ENCODE measurements at regions of chr1 and their contacts with region 1.

Region 1: DNA sequence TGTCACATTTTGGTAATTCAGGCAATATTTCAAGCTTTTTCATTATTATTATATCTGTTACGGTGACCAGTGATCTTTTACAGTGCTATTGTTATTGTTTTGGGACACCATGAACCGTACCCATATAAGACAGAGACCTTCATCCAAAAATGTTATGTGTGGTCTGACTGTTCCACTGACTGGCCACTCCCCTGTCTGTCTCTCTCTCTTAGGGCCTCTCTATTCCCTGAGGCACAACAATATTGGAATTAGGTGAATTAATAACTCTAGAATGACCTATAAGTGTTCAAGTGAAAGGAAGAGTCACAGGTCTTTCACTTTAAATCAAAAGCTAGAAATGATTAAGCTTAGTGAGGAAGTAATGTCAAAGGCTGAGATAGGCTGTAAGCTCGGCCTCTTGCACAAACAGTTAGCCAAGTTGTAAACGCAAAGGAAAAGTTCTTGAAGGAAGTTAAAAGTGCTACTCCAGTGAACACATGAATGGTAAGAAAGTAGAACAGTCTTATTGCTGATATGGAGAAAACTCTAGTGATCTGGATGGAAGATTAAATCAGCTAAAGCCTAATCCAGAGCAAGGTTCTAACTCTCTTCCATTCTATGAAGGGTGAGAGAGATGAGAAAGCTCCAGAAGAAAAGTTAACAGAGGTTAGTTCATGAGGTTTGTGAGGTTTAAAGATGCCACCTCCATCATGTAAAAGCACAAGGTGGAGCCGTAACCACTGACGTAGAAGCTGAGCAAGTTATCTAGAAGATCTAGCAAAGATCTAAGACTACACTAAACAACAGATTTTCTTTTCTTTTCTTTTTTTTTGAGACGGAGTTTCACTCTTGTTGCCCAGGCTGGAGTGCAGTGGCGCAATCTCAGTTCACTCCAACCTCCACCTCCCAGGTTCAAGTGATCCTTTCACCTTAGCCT is 19.7 kb upstream of the DIPK1A start:
- DNase-seq: peak; percentile 55
- H3K4me3 Mint-ChIP-seq: peak overlapping the region; percentile 70
- H3K27ac Mint-ChIP-seq: peak overlapping the region; percentile 98
- H3K4me1 Mint-ChIP-seq: peaks cover 60% of the 10 kb centered on the region
- H3K27me3 Mint-ChIP-seq: no peaks in the 10 kb centered on the region

Region 2: DNA sequence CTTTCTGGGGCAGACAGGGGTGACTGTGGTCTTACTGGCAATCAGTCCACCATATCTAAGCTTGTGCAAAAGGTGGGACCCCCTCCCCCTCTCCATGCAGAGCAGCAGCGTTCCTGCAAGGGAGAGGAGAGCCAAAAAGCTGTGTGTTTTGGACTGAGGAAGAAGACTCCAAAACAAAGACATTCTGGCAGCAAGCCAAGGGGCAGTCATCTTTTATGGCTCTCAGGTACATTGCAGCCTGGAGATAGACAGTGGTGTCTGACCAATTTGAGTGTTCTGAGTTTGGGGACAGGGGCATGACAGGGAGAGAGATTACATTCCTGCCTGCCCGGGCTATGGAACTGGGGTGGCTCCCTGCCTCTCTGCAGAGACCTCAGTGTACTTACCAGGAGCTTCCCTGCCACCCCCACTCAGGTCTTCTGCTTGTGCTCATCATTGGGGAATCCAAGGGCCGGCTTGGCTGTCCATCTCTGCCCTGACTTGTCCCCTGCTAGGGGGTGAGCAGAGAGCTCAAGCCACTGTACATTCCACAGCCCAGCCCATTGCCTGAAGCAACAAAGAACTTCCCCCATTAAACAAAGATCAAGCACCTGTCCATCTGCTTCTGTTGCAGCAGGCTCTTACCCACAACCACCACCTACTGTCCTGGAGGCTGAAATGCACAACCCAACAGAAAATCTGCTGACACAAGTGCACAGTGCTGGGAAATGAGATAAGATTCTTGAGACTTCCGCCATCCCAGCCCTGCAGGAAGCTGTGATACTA is 327.2 kb before region 1 on chr1:
- CTCF ChIA-PET with region 1: no interaction called
- intact Hi-C with region 1: no loop called
- DNase-seq: no peak
- H3K4me3 Mint-ChIP-seq: no peak overlapping the region
- H3K27ac Mint-ChIP-seq: no peak overlapping the region
- H3K4me1 Mint-ChIP-seq: no peaks in the 10 kb centered on the region
- H3K27me3 Mint-ChIP-seq: peaks cover 5% of the 10 kb centered on the region

Region 3: DNA sequence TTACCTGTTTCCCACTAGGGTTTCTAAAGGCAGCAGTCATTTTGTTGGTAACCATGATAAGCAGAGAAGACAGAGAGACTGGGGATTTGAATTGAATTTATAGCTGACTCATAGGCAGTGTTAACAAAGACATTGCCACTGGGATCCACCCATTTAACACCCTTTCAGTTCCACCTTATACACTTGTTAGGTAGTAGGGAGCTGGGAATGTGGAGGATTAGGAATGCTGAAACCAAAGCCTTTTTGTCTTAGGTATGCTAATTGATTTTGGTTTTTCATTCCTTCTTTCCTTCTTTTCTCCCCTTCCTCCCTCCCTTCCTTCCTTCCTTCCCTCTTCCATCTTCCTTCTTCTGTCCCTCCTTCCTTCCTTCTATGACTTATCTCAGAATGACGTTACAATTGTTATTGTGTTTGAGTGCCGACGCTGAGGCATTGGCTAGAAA is 188.6 kb before region 1 on chr1:
- CTCF ChIA-PET with region 1: no interaction called
- intact Hi-C with region 1: no loop called
- DNase-seq: no peak
- H3K4me3 Mint-ChIP-seq: no peak overlapping the region
- H3K27ac Mint-ChIP-seq: no peak overlapping the region
- H3K4me1 Mint-ChIP-seq: peaks cover 2% of the 10 kb centered on the region
- H3K27me3 Mint-ChIP-seq: peaks cover 8% of the 10 kb centered on the region

Region 4: DNA sequence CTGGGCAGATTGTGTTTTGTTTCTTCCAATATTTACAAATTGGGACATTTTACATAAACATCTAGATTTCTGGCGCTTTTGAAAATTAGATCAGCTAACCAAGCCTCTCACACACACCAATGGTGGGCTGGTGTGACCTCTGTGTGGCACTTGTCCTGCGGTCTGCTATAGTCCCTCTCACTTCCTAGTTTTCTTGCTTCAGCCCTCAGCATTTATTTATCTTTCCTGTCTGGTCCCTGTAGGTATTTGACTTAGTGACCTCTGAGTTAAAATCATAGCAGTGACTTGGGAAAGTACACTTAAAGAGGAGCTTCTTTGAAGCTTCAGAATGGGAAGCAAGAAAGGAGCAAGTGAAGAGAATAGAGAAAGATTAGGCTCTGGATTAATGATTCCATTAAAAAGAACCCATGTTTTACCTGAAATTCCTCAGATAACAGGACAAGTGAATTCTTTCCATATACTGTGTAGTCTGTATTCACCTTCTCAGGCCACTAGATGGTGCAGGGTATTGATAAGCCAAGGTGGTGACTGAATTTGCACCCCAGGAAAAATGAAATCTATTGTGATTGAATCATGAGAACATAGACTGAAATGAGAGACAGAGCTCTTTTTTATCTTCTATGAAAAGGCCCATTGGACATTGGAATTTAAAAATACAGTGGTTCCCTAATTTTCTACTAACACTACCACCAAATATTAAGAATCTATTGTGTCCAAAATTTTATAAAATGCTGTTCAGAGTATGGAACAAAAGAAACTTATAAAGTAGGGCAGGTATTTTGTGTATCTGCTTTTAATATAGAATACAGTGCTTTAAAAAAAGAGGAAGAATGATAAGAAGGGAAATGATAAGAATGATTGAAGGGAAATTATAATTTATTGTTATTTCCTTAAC is 12.6 kb before region 1 on chr1:
- CTCF ChIA-PET with region 1: interaction called, 12 read pairs
- intact Hi-C with region 1: loop called (anchors 1 kb)
- DNase-seq: peak; percentile 49
- H3K4me3 Mint-ChIP-seq: no peak overlapping the region
- H3K27ac Mint-ChIP-seq: no peak overlapping the region
- H3K4me1 Mint-ChIP-seq: peaks cover 30% of the 10 kb centered on the region
- H3K27me3 Mint-ChIP-seq: no peaks in the 10 kb centered on the region

Region 5: DNA sequence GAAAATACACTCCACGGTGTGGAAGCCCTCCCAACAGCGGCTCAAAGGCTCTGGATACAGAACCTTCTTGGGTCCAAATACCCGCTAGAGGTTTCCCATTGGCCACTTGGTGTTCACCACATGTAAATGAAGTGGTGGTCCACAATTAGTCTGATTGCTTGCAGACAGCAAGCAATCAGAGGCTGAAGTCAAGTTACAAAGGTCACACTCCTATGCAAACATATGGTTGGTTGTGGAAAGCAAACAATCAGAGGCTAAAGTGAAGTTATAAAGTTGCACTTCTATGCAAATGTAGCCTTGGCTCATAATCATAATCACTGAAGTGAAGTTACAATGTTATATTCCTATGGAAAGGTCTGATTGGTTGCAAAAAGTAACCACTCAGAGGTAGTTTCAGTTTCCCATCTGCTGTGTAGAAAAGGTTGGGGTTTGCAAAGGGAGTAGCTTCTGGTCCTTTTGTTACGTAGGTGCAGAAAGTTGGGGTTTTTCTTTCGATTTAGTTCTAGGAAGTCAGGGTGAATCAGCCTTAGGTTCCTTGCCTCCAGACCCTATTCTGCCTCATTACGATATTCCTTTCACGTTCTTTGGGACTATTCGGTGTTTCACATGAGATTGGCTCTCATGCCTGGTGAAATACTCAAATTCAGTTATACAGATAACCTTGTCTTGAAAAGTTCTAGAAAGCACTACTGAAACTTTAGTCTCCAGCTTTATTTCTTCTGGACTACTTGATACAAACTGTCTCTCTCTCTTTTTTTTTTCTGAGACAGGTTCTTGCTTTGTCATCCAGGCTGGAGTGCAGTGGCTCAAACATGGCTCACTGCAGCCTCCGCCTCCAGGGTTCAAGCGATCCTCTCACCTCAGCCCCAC is 61.4 kb after region 1 on chr1:
- CTCF ChIA-PET with region 1: no interaction called
- intact Hi-C with region 1: loop called (anchors 2 kb)
- DNase-seq: peak; percentile 38
- H3K4me3 Mint-ChIP-seq: peak overlapping the region; percentile 64
- H3K27ac Mint-ChIP-seq: peak overlapping the region; percentile 85
- H3K4me1 Mint-ChIP-seq: peaks cover 26% of the 10 kb centered on the region
- H3K27me3 Mint-ChIP-seq: no peaks in the 10 kb centered on the region

Measured in activated naive CD4-positive, alpha-beta T cell treated with anti-CD3 and anti-CD28 coated beads for 36 hours (primary cell).